ENCODE measurements at regions of chr10 and their contacts with region 1.

Region 1: GRCh38 chr10:63707254-63707910 is 186.2 kb downstream of the REEP3 start:
- H3K4me3 Mint-ChIP-seq: no peak overlapping the region
- H3K27ac Mint-ChIP-seq: peak overlapping the region; percentile 27
- H3K4me1 Mint-ChIP-seq: peaks cover 40% of the 10 kb centered on the region
- H3K27me3 Mint-ChIP-seq: peaks cover 8% of the 10 kb centered on the region

Region 2: GRCh38 chr10:63657761-63658160 is 49.6 kb before region 1 on chr10:
- intact Hi-C with region 1: no loop called
- H3K4me3 Mint-ChIP-seq: no peak overlapping the region
- H3K27ac Mint-ChIP-seq: no peak overlapping the region
- H3K4me1 Mint-ChIP-seq: no peaks in the 10 kb centered on the region
- H3K27me3 Mint-ChIP-seq: no peaks in the 10 kb centered on the region

Region 3: GRCh38 chr10:63692220-63692896 is 15.0 kb before region 1 on chr10:
- intact Hi-C with region 1: loop called (anchors 2 kb)
- H3K4me3 Mint-ChIP-seq: no peak overlapping the region
- H3K27ac Mint-ChIP-seq: peak overlapping the region; percentile 16
- H3K4me1 Mint-ChIP-seq: peaks cover 23% of the 10 kb centered on the region
- H3K27me3 Mint-ChIP-seq: no peaks in the 10 kb centered on the region

Region 4: DNA sequence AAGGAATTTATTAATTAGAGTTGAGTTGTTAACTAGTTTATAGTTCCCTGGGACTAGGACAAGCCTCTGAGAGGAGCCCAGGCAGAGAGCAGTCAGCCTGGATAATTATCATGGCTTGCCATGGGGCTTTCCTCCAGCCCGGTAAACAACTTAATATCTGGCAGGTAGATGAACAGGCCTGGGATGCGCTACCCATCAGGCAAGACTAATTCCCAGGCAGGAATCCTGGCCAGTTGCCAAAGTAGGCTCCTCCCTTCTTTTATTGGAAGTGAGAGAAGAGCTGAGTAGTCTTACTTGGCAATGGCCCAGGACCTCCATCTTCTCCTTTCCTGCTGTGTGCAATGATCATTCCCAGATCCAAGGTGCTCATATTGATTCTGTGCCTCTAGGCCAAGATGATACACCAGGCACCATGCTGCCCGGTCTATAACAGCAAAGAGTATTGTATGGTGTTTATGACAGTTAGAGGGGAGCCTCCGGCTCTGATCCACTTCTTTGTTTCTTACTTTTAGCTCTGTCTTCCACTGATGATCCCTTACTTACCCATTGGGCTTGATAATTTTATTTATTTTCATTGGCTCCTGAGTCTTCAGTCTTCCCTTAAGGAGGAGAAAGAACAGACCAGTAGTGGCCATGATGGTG is 222.6 kb after region 1 on chr10:
- intact Hi-C with region 1: no loop called
- H3K4me3 Mint-ChIP-seq: no peak overlapping the region
- H3K27ac Mint-ChIP-seq: no peak overlapping the region
- H3K4me1 Mint-ChIP-seq: no peaks in the 10 kb centered on the region
- H3K27me3 Mint-ChIP-seq: no peaks in the 10 kb centered on the region

Region 5: GRCh38 chr10:64159910-64160872 is 452.8 kb after region 1 on chr10:
- intact Hi-C with region 1: no loop called
- H3K4me3 Mint-ChIP-seq: no peak overlapping the region
- H3K27ac Mint-ChIP-seq: no peak overlapping the region
- H3K4me1 Mint-ChIP-seq: no peaks in the 10 kb centered on the region
- H3K27me3 Mint-ChIP-seq: peaks cover 3% of the 10 kb centered on the region